Endothelial cell of umbilical vein (primary cell): ENCODE measurements at regions of chr5 and their contacts with region 1.

Region 1: DNA sequence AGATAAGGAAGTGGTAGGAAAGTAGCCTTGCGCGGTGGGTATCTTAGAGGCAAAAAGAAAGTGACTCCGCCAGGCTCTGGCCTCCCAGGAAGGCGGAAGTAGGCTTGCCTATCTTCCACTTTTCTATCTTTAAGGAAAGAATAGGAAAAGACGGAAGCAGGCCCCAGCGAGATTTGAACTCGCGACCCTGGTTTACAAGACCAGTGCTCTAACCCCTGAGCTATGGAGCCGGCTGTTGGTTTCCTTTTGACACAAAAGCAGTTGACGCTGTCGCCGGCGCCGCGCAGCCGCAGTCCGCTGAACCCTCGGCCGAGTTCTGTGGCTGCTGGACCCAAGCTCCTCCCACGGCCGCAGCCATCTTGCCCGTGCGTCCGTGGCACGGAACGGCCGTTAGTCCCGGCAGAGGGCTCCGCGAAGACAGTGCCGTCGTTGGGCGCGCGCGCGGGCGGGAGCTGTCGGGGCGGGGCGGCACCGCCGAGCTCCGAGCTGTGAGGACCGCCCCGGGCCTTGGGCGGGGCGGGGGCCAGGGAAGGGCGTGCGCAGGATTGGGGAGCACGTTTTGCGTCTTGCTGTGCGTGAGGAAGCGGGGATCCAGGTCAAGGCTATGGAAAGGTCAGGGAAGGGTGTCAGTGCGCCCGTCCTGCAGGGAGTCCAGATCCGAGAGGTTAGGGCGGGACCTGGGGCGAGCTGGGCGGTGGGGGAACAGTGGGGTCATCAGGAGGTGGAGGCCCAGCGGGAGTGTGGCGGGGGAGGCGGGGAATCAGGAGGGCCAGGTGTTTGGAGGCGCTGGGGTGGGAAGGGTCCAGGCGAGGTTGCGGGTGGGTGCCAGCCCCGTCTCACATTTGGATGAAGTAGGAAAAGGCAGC is 13.2 kb downstream of the TRIM7 start:
- DNase-seq: peak; percentile 97
- H3K4me3 ChIP-seq: peak overlapping the region; percentile 73 to 91 (median 86)
- H3K27ac ChIP-seq: peak overlapping the region; percentile 23
- H3K4me1 ChIP-seq: peaks cover 18% of the 10 kb centered on the region
- H3K27me3 ChIP-seq: no peaks in the 10 kb centered on the region
- CTCF ChIP-seq: no peak
- POLR2A ChIP-seq: peak; percentile 93

Region 2: DNA sequence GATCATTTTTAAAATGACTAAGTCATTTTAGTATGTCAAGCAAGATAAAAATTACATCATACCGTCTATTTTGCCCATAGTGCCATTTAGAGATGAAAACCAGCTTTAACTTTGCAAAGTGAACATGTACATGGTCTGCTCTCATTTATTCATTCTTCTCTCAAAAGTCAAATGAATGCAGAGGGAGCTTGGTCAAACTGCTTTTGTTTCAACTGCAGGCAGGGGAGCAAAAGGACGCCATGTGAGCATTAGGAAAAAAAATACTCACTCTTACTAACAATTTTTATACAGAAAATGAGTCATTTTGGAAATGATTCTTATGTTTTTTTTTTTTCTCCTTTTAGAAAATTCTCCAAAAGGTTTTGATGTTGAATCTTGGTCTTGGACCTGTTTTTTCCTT is 616.2 kb before region 1 on chr5:
- CTCF ChIA-PET with region 1: no interaction called
- POLR2A ChIA-PET with region 1: no interaction called
- dilution Hi-C with region 1: no loop called
- intact Hi-C with region 1: no loop called
- DNase-seq: no peak
- H3K4me3 ChIP-seq: no peak overlapping the region
- H3K27ac ChIP-seq: no peak overlapping the region
- H3K4me1 ChIP-seq: no peaks in the 10 kb centered on the region
- H3K27me3 ChIP-seq: no peaks in the 10 kb centered on the region
- CTCF ChIP-seq: no peak
- POLR2A ChIP-seq: no peak

Region 3: DNA sequence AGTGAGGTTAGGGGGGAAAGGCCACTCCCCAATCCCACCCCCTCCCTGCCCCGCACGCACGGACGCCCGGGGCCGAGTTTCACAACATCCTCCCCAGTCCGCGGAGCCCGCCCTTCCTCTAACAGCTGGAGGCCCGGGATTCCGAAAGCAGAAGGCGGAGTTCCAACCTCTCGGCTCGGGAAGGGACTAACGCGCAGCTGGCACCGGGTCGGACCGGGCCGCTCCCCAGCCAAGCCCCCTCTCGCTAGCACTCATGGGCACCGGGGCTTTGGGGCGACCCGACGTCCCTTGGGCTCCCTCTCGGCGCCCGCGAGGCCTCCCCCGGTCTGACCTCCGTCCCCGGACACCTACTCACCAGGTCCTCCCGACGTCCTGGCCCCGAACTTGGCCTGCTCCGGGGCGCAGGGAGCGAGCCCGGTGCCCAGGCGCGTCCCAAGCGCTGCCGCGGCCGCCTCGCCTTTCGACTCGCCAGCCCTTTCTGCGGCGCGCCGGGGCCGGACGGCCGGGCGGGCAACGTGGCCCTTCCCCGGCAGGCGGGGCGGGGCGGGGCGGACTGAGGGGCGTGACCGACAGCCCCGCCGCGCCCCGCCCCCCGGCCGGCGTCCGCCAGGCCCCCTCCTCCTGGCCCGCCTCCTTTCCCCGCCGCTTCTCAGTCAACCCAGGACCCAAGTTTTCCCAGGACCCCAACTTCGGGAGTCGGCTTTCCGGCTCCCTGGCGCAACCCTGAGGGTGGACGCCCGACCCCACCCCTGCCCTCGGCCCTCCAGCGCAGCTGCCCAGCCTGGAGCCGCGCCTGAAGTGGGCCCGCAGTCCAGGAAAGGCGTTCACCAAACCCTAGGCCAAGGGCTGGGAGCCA is 389.2 kb before region 1 on chr5 and contains the start of gene MGAT1:
- CTCF ChIA-PET with region 1: no interaction called
- POLR2A ChIA-PET with region 1: no interaction called
- dilution Hi-C with region 1: no loop called
- intact Hi-C with region 1: loop called (anchors 5 kb)
- DNase-seq: peak; percentile 87
- H3K4me3 ChIP-seq: peak within 1 kb of the TSS; percentile 46 to 98 (median 69)
- H3K27ac ChIP-seq: peak within 1 kb of the TSS; percentile 67
- H3K4me1 ChIP-seq: peaks cover 44% of the 10 kb centered on the region
- H3K27me3 ChIP-seq: no peaks in the 10 kb centered on the region
- CTCF ChIP-seq: no peak
- POLR2A ChIP-seq: peak; percentile 85
- total RNA-seq, gene MGAT1: 108 and 123 TPM in 2 replicates

Region 4: DNA sequence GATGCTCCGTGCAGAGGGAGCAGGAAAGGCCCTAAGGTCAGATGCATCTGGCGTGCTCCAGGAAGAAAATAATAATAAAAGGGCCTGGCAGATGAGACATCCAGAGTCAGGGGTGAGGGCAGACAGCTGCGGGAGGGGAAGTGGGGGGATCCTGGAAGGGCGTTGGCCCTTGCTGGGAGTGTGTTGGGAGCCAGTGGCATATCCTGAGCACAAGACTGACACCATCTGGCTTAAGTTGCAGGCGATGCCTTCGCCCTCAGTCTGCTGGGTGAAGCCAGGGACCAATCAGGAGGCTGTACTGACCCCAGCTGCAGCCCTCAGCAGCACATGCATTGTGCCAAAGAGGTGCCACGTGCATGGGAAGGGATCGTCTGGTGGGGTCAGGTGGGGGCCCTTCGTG is 40.6 kb before region 1 on chr5:
- CTCF ChIA-PET with region 1: no interaction called
- POLR2A ChIA-PET with region 1: no interaction called
- dilution Hi-C with region 1: no loop called
- intact Hi-C with region 1: no loop called
- DNase-seq: no peak
- H3K4me3 ChIP-seq: no peak overlapping the region
- H3K27ac ChIP-seq: no peak overlapping the region
- H3K4me1 ChIP-seq: peaks cover 3% of the 10 kb centered on the region
- H3K27me3 ChIP-seq: peaks cover 0 to 2% of the 10 kb centered on the region in 2 experiments
- CTCF ChIP-seq: no peak
- POLR2A ChIP-seq: no peak

Region 5: DNA sequence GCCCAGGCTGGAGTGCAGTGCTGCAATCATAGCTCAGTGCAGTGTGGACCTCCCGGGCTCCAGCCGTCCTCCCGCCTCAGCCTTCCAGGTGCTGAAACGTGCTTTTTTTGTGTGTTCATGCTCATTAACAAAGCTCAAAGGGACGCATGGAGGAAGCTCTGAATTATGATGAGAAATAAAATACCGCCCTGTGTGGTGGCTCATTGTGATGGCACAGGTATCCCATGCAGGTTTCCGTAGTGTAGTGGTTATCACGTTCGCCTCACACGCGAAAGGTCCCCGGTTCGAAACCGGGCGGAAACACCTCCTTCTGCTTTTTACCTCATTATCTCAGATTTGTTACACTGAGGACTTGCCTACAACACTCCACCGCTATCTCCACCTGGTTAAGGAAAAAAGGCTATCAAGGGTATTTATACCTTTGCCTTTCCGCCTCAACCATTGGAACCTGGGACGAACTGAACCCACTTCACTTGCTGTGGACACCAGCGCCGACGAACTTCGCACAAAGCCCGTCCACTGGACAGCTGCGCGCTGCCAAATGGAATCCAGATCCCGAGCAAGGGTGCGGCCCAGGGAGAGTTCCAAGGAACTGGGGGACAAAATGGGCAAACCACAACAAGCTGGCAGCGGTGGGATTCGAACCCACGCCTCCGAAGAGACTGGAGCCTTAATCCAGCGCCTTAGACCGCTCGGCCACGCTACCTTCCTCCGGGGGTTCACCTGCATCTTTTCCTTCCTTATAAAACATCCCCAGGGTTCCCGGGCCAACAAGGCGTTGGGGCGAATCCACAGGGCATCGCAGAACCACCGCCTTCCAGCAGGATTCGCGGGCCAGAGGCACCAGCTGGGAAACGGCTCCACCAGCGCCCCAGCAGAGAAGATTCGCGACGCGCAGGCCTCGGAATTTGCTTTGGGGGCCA is 18.1 kb before region 1 on chr5:
- CTCF ChIA-PET with region 1: interaction called, 3 read pairs
- POLR2A ChIA-PET with region 1: no interaction called
- dilution Hi-C with region 1: no loop called
- intact Hi-C with region 1: loop called (anchors 2 kb)
- DNase-seq: peak; percentile 43
- H3K4me3 ChIP-seq: peak overlapping the region in 1 of 3 experiments; percentile 14
- H3K27ac ChIP-seq: no peak overlapping the region
- H3K4me1 ChIP-seq: peaks cover 7% of the 10 kb centered on the region
- H3K27me3 ChIP-seq: peaks cover 15 to 19% of the 10 kb centered on the region in 2 experiments
- CTCF ChIP-seq: no peak
- POLR2A ChIP-seq: no peak

Region 6: DNA sequence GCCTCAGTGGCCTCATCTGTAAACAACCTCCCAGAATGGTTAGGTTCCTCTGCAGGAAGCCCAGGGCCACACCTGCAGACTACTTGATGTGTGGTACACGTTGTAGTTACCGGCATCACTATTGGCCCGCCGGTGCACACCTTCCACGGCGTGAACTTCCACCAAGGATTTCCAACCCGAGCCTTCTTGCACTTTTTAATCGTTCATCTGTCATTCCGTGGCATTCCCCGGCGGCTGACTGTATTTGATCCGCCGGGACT is 26.0 kb after region 1 on chr5:
- CTCF ChIA-PET with region 1: interaction called, 3 read pairs
- POLR2A ChIA-PET with region 1: interaction called, 3 read pairs
- dilution Hi-C with region 1: no loop called
- intact Hi-C with region 1: loop called (anchors 1 kb)
- DNase-seq: no peak
- H3K4me3 ChIP-seq: peak overlapping the region in 2 of 3 experiments; percentile 7 to 9
- H3K27ac ChIP-seq: no peak overlapping the region
- H3K4me1 ChIP-seq: peaks cover 14% of the 10 kb centered on the region
- H3K27me3 ChIP-seq: peaks cover 0 to 4% of the 10 kb centered on the region in 2 experiments
- CTCF ChIP-seq: peak in 1 of 2 donors; percentile 1
- POLR2A ChIP-seq: no peak

Region 7: GRCh38 chr5:181243512-181244343 is 52.0 kb after region 1 on chr5 and contains the start of gene RACK1:
- CTCF ChIA-PET with region 1: no interaction called
- POLR2A ChIA-PET with region 1: interaction called, 3 read pairs
- dilution Hi-C with region 1: no loop called
- intact Hi-C with region 1: loop called (anchors 1 kb)
- DNase-seq: peak; percentile 95
- H3K4me3 ChIP-seq: peak within 1 kb of the TSS; percentile 66 to 96 (median 89)
- H3K27ac ChIP-seq: peak within 1 kb of the TSS; percentile 91
- H3K4me1 ChIP-seq: peaks cover 42% of the 10 kb centered on the region
- H3K27me3 ChIP-seq: no peaks in the 10 kb centered on the region
- CTCF ChIP-seq: no peak
- POLR2A ChIP-seq: peak; percentile 93
- total RNA-seq, gene RACK1: 1,910 and 2,029 TPM in 2 replicates